PC-3 (cell line): ENCODE measurements at regions of chr12 and their contacts with region 1.

Region 1: DNA sequence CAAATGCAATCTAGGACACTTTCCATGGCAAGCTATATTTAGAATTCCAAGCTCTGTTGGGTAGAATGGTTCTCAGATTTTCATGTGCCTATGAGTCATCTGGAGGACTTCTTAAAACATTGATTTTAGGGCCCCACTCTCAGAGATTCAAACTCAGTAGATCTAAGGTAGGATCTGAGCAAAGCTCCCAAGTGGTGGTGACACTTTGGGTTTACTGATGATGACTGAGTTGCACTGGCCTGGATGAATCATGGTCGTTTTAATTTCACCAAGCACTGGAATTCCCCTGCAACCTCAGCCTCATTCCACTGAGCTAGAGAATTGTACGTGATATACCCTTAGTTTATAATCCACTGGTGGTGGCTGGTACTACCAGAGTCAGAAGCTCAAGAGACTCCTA is 86.5 kb downstream of the PPM1H start:
- DNase-seq: peak; percentile 82
- ATAC-seq: peak; percentile 93
- H3K4me3 ChIP-seq: no peak overlapping the region
- H3K27ac ChIP-seq: peak overlapping the region; percentile 56
- H3K4me1 ChIP-seq: peaks cover 15% of the 10 kb centered on the region
- H3K27me3 ChIP-seq: no peaks in the 10 kb centered on the region
- CTCF ChIP-seq: no peak

Region 2: DNA sequence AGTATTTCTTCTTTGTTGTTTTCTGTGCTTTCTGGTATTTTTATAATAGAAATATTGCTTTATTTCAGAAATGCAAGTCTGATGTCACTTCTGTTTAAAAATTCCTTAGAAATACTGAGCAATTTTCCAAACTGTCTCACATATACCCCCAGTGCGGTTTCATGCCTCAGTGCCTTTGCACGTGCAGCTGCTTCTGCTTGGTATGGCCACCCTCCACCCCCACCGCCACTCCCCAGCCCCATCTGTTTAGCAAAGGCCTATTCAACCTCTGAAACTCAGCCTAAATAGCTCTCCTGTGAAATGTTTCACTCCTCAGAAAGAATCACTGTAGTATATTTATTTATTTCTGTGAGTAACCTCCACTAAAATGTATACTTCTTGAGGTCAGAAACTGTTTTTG is 34.3 kb after region 1 on chr12:
- CTCF ChIA-PET with region 1: no interaction called
- POLR2A ChIA-PET with region 1: no interaction called
- intact Hi-C with region 1: no loop called
- DNase-seq: no peak
- ATAC-seq: no peak
- H3K4me3 ChIP-seq: no peak overlapping the region
- H3K27ac ChIP-seq: no peak overlapping the region
- H3K4me1 ChIP-seq: peaks cover 7% of the 10 kb centered on the region; the same call in 1 of the 2 replicates
- H3K27me3 ChIP-seq: no peaks in the 10 kb centered on the region
- CTCF ChIP-seq: no peak

Region 3: GRCh38 chr12:62957233-62957953 is 109.0 kb after region 1 on chr12:
- CTCF ChIA-PET with region 1: interaction called, 12 read pairs
- POLR2A ChIA-PET with region 1: no interaction called
- intact Hi-C with region 1: no loop called
- DNase-seq: peak; percentile 56
- ATAC-seq: peak; percentile 92
- H3K4me3 ChIP-seq: no peak overlapping the region
- H3K27ac ChIP-seq: no peak overlapping the region
- H3K4me1 ChIP-seq: peaks cover 10% of the 10 kb centered on the region
- H3K27me3 ChIP-seq: no peaks in the 10 kb centered on the region
- CTCF ChIP-seq: no peak